Lower leg skin (tissue), 4 donors: ENCODE measurements at regions of chr3 and their contacts with region 1.

Region 1: DNA sequence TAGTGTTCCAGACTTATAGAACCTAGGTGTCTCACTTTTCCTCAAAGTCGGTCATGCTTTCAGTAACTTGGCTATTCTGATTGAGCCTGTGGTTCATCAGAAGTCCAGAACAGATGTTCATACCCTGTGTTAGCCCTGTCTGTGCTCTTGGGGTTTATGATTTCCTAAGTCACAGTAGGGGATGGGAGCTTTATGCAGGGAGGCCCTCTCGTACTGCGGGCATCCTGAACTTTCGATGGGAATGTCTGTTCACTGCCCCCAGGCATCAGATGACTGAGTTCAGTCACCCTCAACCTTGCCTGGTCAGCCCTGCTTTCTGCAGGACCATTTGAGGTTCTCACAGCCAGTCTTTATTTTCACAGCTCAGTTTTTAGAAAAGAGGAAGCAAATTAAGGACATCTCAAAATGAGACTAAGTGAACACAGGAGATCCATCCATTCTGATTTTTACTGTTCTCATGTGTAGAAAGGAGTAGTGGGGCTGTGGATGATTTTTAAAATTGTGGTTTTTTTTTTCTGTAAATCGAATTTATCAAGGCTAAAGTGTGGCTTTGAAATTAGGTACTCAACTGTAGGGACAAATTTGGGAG is 71.3 kb downstream of the CMTM8 start:
- DNase-seq: no peak
- H3K4me3 ChIP-seq: no peak overlapping the region
- CTCF ChIP-seq: no peak
- POLR2A ChIP-seq: no peak

Region 2: GRCh38 chr3:32354362-32354778 is 44.6 kb after region 1 on chr3:
- intact Hi-C with region 1: loop called (anchors 1 kb)
- DNase-seq: no peak
- H3K4me3 ChIP-seq: no peak overlapping the region
- CTCF ChIP-seq: no peak
- POLR2A ChIP-seq: no peak

Region 3: GRCh38 chr3:33993631-33994030 is 1683.9 kb after region 1 on chr3:
- intact Hi-C with region 1: loop called (anchors 5 kb)
- DNase-seq: no peak
- H3K4me3 ChIP-seq: no peak overlapping the region
- CTCF ChIP-seq: no peak
- POLR2A ChIP-seq: no peak